ENCODE measurements at regions of chr19 and their contacts with region 1.

Region 1: GRCh38 chr19:13150187-13150930 is at the starts of genes IER2 and STX10:
- DNase-seq: peak; percentile 86 to 97 (median 94)
- ATAC-seq: peak; percentile 55
- H3K4me3 ChIP-seq: peak within 1 kb of the TSS; percentile 77 to 94
- H3K4me3 Mint-ChIP-seq: peak within 1 kb of the TSS; percentile 98
- H3K27ac ChIP-seq: peak within 1 kb of the TSS; percentile 96 to 99
- H3K27ac Mint-ChIP-seq: peak within 1 kb of the TSS; percentile 93
- H3K4me1 ChIP-seq: peaks cover 11% of the 10 kb centered on the region
- H3K4me1 Mint-ChIP-seq: peaks cover 26% of the 10 kb centered on the region
- H3K27me3 ChIP-seq: no peaks in the 10 kb centered on the region
- H3K27me3 Mint-ChIP-seq: no peaks in the 10 kb centered on the region
- CTCF ChIP-seq: peak; percentile 51
- total RNA-seq, gene IER2: 223 to 229 TPM
- total RNA-seq, gene STX10: 35.7 to 37.5 TPM

Region 2: DNA sequence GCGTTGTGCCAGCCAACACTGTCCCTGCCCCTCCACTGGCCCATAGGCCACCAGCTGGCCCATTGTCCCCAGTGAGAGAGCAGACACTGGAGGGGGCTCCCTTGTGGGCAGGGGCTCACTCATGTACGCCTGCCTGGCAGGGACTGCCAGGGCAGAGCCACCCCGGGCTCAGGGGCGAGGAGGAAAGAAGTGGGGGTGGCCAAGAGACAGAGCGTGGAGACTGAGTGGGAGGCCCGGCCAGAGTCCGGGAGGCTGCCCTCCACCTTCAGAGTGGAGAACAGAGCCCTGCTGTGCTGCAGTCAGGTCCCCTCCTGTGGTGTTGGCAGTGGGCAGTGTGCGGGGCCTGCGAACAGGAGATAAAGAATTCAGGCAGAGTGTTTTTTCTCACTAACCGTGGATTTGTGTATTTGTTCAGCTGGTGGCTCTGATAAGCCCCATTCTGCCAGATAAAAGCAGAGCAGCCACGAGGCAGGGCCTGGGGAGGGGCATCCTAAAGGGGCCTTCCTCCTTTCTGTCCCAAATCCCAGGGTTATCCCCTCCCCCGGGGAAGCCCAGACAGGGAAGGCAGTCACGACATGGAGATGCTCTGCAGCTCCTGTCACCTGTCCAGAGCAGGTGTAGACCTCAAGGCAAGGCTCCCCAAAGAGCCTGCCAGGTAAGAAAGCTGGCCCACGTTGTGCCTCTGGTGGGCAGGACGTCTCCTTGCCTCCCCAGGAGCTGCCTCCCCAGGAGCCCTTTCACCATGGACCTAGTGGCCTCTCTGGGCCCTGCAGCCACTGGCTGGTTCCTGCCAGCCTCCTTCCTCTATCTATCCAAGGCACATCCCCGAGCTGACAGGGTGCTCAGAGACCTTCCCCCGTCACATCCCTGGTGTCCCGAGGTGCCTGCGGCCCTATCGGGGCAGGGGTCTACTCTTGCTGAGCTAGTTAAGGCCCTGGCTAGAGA is 80.7 kb before region 1 on chr19:
- CTCF ChIA-PET with region 1: no interaction called
- POLR2A ChIA-PET with region 1: no interaction called
- intact Hi-C with region 1: no loop called
- DNase-seq: no peak
- ATAC-seq: no peak
- H3K4me3 ChIP-seq: no peak overlapping the region
- H3K4me3 Mint-ChIP-seq: no peak overlapping the region
- H3K27ac ChIP-seq: no peak overlapping the region
- H3K27ac Mint-ChIP-seq: no peak overlapping the region
- H3K4me1 ChIP-seq: no peaks in the 10 kb centered on the region
- H3K4me1 Mint-ChIP-seq: no peaks in the 10 kb centered on the region
- H3K27me3 ChIP-seq: no peaks in the 10 kb centered on the region
- H3K27me3 Mint-ChIP-seq: no peaks in the 10 kb centered on the region
- CTCF ChIP-seq: no peak

Region 3: GRCh38 chr19:13099073-13099999 is 51.0 kb before region 1 on chr19:
- CTCF ChIA-PET with region 1: interaction called, 3 read pairs
- POLR2A ChIA-PET with region 1: interaction called, 6 read pairs
- intact Hi-C with region 1: loop called (anchors 1 to 5 kb)
- DNase-seq: peak; percentile 61 to 93 (median 81)
- ATAC-seq: peak; percentile 66
- H3K4me3 ChIP-seq: peak overlapping the region; percentile 35 to 54
- H3K4me3 Mint-ChIP-seq: peak overlapping the region; percentile 73
- H3K27ac ChIP-seq: peak overlapping the region; percentile 65 to 87
- H3K27ac Mint-ChIP-seq: peak overlapping the region; percentile 96
- H3K4me1 ChIP-seq: peaks cover 82% of the 10 kb centered on the region
- H3K4me1 Mint-ChIP-seq: peaks cover 51% of the 10 kb centered on the region
- H3K27me3 ChIP-seq: peaks cover 16 to 33% of the 10 kb centered on the region in 2 experiments
- H3K27me3 Mint-ChIP-seq: peaks cover 24% of the 10 kb centered on the region
- CTCF ChIP-seq: no peak

Region 4: DNA sequence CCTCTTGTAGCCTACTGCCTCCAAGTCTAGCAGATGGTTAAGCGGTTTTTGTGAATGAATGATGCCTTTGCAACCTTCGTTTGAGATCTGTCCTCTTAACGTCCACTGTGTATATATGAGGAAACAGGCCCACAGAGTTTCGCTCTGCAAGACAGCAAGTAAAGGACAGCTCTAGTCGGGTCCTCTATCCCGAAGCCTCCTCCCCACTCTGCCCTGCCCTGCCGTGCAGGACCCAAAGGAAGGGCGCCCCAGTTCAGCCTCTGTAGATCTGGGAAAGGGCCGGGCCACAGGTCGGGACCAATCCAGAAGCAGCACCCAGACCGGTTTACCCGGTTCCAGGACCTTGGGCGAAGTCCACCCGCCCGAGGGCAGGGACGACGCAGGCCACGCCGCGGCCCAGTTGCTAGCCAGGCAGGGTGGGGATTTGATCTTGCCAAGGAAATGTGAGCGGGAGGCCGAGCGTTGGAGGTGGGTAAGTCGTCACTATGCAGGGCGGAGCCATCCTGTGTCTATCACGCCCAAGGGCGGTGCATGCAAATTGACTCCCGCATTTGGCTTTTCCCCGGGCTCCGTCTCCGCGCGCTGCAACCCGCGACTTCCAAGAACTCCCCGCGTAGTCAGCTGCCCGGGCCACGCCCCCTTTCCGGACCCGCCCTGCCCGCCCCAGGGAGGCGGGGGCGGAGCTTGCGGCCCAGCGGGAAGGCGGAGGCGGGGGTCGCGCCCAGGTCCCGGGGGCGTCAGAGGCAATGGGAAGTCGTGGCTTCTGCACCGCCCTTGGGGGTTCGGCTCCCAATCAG is 12.4 kb after region 1 on chr19:
- CTCF ChIA-PET with region 1: interaction called, 14 read pairs
- POLR2A ChIA-PET with region 1: interaction called, 246 read pairs
- intact Hi-C with region 1: loop called (anchors 1 kb)
- DNase-seq: peak; percentile 40 to 93 (median 82)
- ATAC-seq: peak; percentile 49
- H3K4me3 ChIP-seq: peak overlapping the region; percentile 56 to 58
- H3K4me3 Mint-ChIP-seq: peak overlapping the region; percentile 85
- H3K27ac ChIP-seq: peak overlapping the region; percentile 68 to 86
- H3K27ac Mint-ChIP-seq: peak overlapping the region; percentile 96
- H3K4me1 ChIP-seq: peaks cover 72% of the 10 kb centered on the region
- H3K4me1 Mint-ChIP-seq: peaks cover 67% of the 10 kb centered on the region
- H3K27me3 ChIP-seq: no peaks in the 10 kb centered on the region
- H3K27me3 Mint-ChIP-seq: no peaks in the 10 kb centered on the region
- CTCF ChIP-seq: no peak

Region 5: GRCh38 chr19:13195678-13196077 is 45.3 kb after region 1 on chr19:
- CTCF ChIA-PET with region 1: interaction called, 19 read pairs
- POLR2A ChIA-PET with region 1: interaction called, 16 read pairs
- intact Hi-C with region 1: loop called in 1 of 2 experiments (anchors 2 kb)
- DNase-seq: peak in 8 of 9 experiments; percentile 44 to 75 (median 56)
- ATAC-seq: no peak
- H3K4me3 ChIP-seq: no peak overlapping the region
- H3K4me3 Mint-ChIP-seq: no peak overlapping the region
- H3K27ac ChIP-seq: no peak overlapping the region
- H3K27ac Mint-ChIP-seq: no peak overlapping the region
- H3K4me1 ChIP-seq: peaks cover 32% of the 10 kb centered on the region
- H3K4me1 Mint-ChIP-seq: peaks cover 21% of the 10 kb centered on the region
- H3K27me3 ChIP-seq: no peaks in the 10 kb centered on the region
- H3K27me3 Mint-ChIP-seq: no peaks in the 10 kb centered on the region
- CTCF ChIP-seq: peak; percentile 57

Region 6: DNA sequence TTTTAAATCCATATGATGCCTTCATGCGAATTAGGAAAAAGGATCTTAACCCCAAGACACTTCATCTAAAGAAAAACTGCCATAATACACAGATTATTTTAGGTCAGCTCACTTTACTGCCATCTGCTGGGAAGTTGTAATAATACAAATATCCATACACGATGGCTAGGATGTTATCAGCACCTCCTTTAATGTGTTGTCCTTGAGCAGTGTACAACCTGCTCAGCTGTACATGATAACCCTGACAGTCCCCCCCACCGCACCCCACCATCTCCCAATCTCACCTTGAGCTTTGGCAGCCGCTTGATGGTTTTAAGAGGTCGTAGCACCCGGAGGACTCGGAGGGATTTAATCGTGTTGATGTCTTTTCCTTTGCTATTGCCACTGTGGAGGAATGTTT is 112.1 kb after region 1 on chr19:
- CTCF ChIA-PET with region 1: interaction called, 4 read pairs
- POLR2A ChIA-PET with region 1: interaction called, 3 read pairs
- intact Hi-C with region 1: loop called (anchors 1 to 2 kb)
- DNase-seq: peak in 2 of 9 experiments; percentile 61 to 72
- ATAC-seq: peak; percentile 59
- H3K4me3 ChIP-seq: no peak overlapping the region
- H3K4me3 Mint-ChIP-seq: no peak overlapping the region
- H3K27ac ChIP-seq: no peak overlapping the region
- H3K27ac Mint-ChIP-seq: no peak overlapping the region
- H3K4me1 ChIP-seq: no peaks in the 10 kb centered on the region
- H3K4me1 Mint-ChIP-seq: no peaks in the 10 kb centered on the region
- H3K27me3 ChIP-seq: no peaks in the 10 kb centered on the region
- H3K27me3 Mint-ChIP-seq: peaks cover 8% of the 10 kb centered on the region
- CTCF ChIP-seq: peak; percentile 79

Region 7: DNA sequence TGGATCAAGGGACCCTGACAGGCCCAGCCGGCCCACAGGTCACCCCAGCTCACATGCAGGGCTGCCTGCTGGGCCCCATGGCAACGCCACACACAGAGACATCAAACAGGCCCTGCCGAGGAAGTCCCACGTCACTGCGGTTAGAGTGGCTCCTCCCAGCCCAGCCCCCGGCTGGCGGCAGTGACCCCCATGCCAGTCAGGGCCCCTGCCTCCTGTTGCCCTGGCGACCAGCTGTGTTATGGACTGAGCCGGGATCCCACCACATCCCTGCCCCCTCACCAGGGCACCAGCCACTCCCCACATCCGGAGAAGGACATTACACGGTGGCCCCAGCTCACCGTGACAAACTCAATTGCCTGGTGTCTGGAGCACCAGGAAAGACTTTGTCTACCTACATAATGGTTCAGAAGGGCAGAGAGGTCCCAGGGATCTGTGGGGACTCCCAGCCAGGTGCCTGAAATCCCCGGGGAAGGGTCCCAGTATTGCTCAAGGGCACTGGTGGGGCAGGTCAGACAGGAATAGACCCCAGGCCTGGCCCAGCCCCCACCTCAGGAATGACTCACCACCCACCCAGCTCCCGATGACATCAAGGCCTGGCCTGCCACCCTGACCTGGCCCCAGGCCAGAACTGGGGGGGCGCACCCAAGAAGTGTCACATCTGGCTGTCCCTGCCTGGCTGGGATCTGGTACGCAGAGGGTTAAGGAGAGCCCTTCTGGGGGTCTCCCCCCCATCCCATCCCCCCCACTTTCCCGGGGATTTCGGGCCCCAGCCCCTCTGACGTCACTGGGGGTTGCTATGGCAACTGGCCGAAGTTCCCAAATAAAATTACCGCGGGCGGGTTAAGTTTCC is 696.4 kb after region 1 on chr19:
- CTCF ChIA-PET with region 1: no interaction called
- POLR2A ChIA-PET with region 1: no interaction called
- intact Hi-C with region 1: loop called in 1 of 2 experiments (anchors 5 kb)
- DNase-seq: peak; percentile 90 to 99 (median 97)
- ATAC-seq: peak; percentile 54
- H3K4me3 ChIP-seq: peak overlapping the region; percentile 55 to 68
- H3K4me3 Mint-ChIP-seq: peak overlapping the region; percentile 89
- H3K27ac ChIP-seq: peak overlapping the region; percentile 98 to 99
- H3K27ac Mint-ChIP-seq: peak overlapping the region; percentile 100
- H3K4me1 ChIP-seq: peaks cover 65% of the 10 kb centered on the region
- H3K4me1 Mint-ChIP-seq: peaks cover 56% of the 10 kb centered on the region
- H3K27me3 ChIP-seq: no peaks in the 10 kb centered on the region
- H3K27me3 Mint-ChIP-seq: no peaks in the 10 kb centered on the region
- CTCF ChIP-seq: no peak

Region 8: DNA sequence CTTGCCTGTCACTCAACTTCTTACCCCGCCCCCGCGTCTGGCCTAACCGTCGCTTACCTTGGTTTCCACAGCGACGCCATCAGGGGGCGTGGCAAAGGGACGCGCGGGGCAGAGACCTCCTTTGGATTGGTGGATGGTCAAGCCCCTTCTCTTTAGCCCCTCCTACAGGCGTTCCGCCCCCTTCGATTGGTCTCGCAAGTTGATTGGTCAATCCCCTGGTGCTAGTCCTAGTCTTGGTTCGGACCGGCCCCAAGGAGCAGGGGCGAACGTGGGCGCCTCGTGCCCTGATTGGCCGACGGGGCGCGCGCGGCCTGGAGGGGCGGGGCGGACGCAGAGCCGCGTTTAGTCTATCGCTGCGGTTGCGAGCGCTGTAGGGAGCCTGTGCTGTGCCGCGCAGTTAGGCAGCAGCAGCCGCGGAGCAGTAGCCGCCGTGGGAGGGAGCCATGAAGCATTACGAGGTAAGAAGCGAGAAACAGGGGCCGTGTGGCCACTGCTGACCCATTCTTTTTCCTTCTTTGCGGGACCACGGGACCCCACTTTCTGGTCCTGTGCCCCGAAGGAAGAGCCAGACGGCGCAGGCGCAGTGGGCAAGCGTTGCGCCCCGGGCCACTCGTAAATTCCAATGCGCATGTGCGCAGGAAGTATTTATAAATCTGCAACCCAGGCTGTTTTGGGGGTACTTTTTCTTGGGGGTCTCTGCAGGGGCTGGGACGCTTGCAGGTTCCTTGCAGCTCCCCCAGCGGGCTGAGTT is 1379.1 kb after region 1 on chr19 and contains the start of gene TECR:
- CTCF ChIA-PET with region 1: no interaction called
- POLR2A ChIA-PET with region 1: no interaction called
- intact Hi-C with region 1: loop called in 1 of 2 experiments (anchors 10 kb)
- DNase-seq: peak; percentile 100
- ATAC-seq: peak; percentile 93
- H3K4me3 ChIP-seq: peak within 1 kb of the TSS; percentile 85 to 97
- H3K4me3 Mint-ChIP-seq: peak within 1 kb of the TSS; percentile 97
- H3K27ac ChIP-seq: peak within 1 kb of the TSS; percentile 88 to 89
- H3K27ac Mint-ChIP-seq: peak within 1 kb of the TSS; percentile 98
- H3K4me1 ChIP-seq: peaks cover 28% of the 10 kb centered on the region
- H3K4me1 Mint-ChIP-seq: peaks cover 54% of the 10 kb centered on the region
- H3K27me3 ChIP-seq: no peaks in the 10 kb centered on the region
- H3K27me3 Mint-ChIP-seq: no peaks in the 10 kb centered on the region
- CTCF ChIP-seq: no peak
- total RNA-seq, gene TECR: 300 to 325 TPM